ENCODE measurements at regions of chr4 and their contacts with region 1.

Region 1: GRCh38 chr4:100742045-100742444 is 224.2 kb upstream of the EMCN start:
- DNase-seq: no peak
- ATAC-seq: peak in 2 of 4 donors; percentile 63 to 74
- H3K4me3 ChIP-seq: no peak overlapping the region
- H3K27ac ChIP-seq: no peak overlapping the region
- H3K4me1 ChIP-seq: no peaks in the 10 kb centered on the region
- H3K27me3 ChIP-seq: no peaks in the 10 kb centered on the region
- CTCF ChIP-seq: peak in 2 of 4 donors; percentile 14 to 34

Region 2: DNA sequence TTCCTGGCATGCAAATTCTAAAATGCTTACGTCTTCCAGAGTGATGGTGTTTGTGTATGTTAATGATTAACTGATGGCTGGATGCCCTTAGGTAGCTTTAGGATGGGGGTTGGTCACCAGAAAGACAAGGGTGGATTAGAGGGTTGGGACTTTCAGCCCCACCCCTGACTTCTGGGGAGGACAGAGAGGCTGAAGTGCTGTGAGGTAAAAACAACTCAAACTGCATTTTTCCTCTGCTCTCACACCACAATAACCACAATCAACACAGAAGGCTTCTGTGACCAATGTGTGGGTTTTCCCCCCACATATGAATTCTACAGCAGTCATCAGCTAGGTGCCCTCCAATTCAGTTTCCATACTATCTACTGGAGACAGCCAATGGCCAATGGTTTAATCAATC is 533.1 kb before region 1 on chr4:
- intact Hi-C with region 1: no loop called
- DNase-seq: no peak
- ATAC-seq: peak; percentile 39 to 80 (median 58)
- H3K4me3 ChIP-seq: no peak overlapping the region
- H3K27ac ChIP-seq: no peak overlapping the region
- H3K4me1 ChIP-seq: no peaks in the 10 kb centered on the region
- H3K27me3 ChIP-seq: no peaks in the 10 kb centered on the region
- CTCF ChIP-seq: no peak

Region 3: GRCh38 chr4:100317032-100317864 is 424.8 kb before region 1 on chr4:
- intact Hi-C with region 1: no loop called
- DNase-seq: no peak
- ATAC-seq: no peak
- H3K4me3 ChIP-seq: no peak overlapping the region
- H3K27ac ChIP-seq: no peak overlapping the region
- H3K4me1 ChIP-seq: no peaks in the 10 kb centered on the region
- H3K27me3 ChIP-seq: no peaks in the 10 kb centered on the region
- CTCF ChIP-seq: no peak

Region 4: DNA sequence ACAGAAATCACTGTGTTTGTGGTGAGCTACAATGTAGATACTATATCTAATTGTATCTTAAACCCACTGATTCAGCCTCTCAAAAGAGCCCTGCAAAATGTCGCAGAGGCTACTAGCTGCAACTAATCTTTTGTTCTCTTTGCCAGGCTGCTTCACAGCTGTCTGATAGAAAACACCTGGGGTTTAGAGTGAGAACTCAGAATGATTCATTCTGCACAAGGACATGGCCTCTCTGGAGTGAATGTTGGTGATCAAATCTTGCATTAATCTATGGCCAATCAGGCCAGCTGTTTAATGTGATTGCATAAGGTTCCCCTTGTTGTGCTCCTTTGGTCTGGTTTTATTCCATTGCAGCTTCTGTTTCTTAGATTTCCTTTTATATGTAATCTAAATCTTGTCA is 324.5 kb before region 1 on chr4:
- intact Hi-C with region 1: loop called in 1 of 3 experiments (anchors 10 kb)
- DNase-seq: peak in 1 of 6 donors; percentile 13
- ATAC-seq: peak in 1 of 4 donors; percentile 19
- H3K4me3 ChIP-seq: no peak overlapping the region
- H3K27ac ChIP-seq: no peak overlapping the region
- H3K4me1 ChIP-seq: no peaks in the 10 kb centered on the region
- H3K27me3 ChIP-seq: no peaks in the 10 kb centered on the region
- CTCF ChIP-seq: no peak

Region 5: GRCh38 chr4:101103381-101104142 is 361.5 kb after region 1 on chr4:
- intact Hi-C with region 1: no loop called
- DNase-seq: no peak
- ATAC-seq: peak in 2 of 4 donors; percentile 57 to 72
- H3K4me3 ChIP-seq: no peak overlapping the region
- H3K27ac ChIP-seq: no peak overlapping the region
- H3K4me1 ChIP-seq: peaks cover 0 to 3% (median 0%) of the 10 kb centered on the region in 3 donors
- H3K27me3 ChIP-seq: no peaks in the 10 kb centered on the region
- CTCF ChIP-seq: no peak